Breast epithelium (tissue), 4 donors: ENCODE measurements at regions of chr3 and their contacts with region 1.

Region 1: DNA sequence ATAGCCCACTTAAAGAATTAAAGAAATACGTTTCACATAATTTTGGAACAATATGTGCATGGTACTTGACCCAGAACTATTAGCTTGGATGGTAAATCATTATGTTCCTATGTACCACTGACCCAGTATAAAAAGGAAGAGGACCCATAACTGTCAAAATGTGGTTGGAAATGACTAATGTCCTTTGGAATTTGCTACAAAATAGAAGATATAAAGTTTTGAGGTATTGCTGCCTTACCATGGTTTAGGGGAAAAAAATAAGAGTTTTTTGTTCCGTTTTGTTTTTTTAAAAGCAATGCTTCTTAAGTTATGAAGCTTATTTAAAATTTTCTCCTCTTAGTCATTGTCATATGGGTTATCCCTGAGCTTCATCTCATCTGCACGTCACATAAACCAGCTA is 15.8 kb upstream of the TFDP2 start:
- DNase-seq: no peak
- H3K4me3 ChIP-seq: no peak overlapping the region
- H3K27ac ChIP-seq: no peak overlapping the region
- H3K4me1 ChIP-seq: no peaks in the 10 kb centered on the region
- H3K27me3 ChIP-seq: no peaks in the 10 kb centered on the region
- CTCF ChIP-seq: no peak
- POLR2A ChIP-seq: no peak

Region 2: DNA sequence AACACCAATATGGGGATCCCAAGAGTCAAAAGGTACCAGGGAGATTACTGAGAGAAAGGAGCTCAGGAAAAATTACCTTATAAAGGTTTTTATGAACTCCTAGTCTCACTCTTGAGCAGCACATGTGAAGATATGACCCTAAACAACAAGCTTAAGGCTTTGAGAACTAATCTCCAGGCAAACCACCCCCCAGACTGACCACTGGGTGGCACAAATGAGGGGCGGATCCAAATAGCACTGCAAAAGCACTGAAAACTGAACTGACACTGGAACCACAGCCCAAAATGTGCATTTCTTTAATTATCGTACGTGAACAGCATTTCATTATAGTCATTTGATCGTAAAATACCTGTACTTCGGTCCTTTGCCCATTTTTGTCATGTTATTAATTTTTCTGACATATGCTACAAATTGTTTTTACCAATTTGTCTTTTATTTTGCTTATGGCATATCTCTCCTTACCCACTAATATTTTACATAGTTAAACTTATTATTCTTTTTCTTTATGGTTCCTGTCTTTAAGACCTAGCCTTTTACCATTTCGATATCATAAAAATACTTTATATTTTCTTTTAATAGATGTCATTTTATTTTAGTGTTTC is 15.7 kb after region 1 on chr3:
- intact Hi-C with region 1: loop called (anchors 2 kb)
- DNase-seq: no peak
- H3K4me3 ChIP-seq: no peak overlapping the region
- H3K27ac ChIP-seq: no peak overlapping the region
- H3K4me1 ChIP-seq: no peaks in the 10 kb centered on the region
- H3K27me3 ChIP-seq: no peaks in the 10 kb centered on the region
- CTCF ChIP-seq: peak in 2 of 3 donors; percentile 34 to 42
- POLR2A ChIP-seq: no peak

Region 3: GRCh38 chr3:143514874-143515273 is 1349.7 kb after region 1 on chr3:
- intact Hi-C with region 1: no loop called
- DNase-seq: no peak
- H3K4me3 ChIP-seq: no peak overlapping the region
- H3K27ac ChIP-seq: no peak overlapping the region
- H3K4me1 ChIP-seq: no peaks in the 10 kb centered on the region
- H3K27me3 ChIP-seq: no peaks in the 10 kb centered on the region
- CTCF ChIP-seq: no peak
- POLR2A ChIP-seq: no peak